ENCODE measurements at regions of chr1 and their contacts with region 1.

Region 1: DNA sequence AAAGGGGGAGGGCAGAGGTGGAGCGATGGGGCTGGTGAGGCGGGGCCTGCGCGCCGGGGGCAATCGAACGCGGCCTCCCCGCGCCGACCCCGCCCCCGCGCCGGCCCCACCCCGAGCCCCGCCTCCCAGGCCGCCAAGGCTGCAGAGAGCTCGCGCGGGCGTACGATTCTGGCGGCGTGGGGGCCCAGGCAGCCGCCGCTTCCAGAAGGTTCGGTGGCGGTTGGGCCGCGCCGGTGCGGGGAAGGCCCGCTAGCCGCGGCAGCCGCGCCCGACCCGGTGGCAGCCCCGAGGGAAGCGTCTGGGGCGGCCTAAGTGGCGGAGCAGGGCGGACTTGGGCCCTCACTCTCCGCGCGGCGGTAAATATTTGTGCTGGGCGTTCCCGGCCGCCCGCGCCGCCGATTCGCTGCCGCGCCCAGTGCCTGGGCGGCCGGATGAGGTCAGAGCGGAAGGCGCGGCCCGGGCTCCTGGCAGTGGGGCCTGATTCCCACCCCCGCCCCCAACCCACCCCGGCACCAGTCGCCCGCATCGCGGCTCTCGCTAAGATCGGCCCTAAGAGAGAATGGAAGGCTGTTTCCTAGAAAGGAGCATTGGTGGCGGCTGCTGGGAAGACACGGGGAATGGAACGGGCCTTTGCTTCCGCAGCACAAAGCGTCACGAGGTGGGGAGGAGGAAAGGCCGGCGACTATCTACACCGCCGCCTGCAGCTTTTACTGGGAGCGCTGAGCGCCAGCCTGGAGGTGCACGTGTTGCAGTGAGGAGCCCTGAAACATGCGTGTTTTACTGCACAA is at the start of gene ACOT7:
- DNase-seq: peak in 1 of 2 experiments; percentile 88
- H3K4me3 ChIP-seq: peak within 1 kb of the TSS; percentile 66 to 91 (median 72)
- H3K27ac ChIP-seq: peak within 1 kb of the TSS; percentile 91
- H3K4me1 ChIP-seq: peaks cover 0 to 11% (median 9%) of the 10 kb centered on the region in 4 experiments; a peak in 5 of 7 replicates
- H3K27me3 ChIP-seq: peaks cover 0 to 3% (median 0%) of the 10 kb centered on the region in 4 experiments; a peak in 3 of 7 replicates
- CTCF ChIP-seq: no peak
- EP300 ChIP-seq: no peak
- POLR2A ChIP-seq: peak in 1 of 2 experiments; percentile 52; a peak in 1 of 3 replicates
- RAD21 ChIP-seq: no peak
- total RNA-seq, gene ACOT7: 150 and 151 TPM in 2 replicates

Region 2: DNA sequence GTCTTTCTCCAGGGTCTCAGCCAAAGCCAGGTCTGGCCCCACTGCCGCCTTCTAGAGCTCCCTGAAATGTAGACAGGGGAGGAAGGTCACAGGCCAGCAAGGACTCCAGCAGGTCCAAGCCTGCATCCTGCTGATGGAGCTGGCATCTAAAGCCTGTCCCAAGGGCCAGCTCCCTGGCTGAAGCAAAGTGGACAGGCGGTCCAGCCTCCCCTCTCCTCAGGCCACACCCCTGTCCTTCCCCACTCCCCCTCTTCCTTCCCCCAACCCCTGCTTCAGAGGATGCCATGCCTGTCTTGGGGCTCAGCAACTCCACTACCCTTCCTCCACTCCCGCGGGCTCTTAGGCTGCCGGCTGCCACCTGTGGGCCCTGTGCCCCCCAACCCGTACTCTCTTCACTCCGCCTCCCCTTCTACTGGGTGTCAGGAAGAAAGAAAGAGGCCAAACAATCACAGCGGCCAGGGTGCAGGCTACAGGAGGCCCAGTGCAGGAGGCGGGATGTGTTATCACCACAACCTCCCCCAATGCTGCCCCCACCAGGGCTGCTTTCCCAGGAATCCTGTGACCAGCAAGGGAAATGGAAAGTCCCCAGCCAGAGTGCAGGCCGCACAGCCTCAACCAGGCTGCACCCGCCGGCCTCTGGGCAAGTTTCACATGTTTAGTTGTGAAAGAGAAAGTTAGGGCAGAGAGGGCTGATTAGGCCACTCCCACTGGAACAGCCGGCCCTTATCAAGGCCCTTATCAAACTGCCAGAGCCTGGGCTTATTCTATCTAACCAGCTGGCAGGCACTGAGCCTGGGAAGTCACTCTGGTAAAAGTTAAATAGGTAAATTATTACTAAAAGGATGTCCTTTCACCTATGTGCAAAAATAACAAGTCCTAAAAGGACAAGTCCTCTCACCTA is 34.1 kb before region 1 on chr1:
- CTCF ChIA-PET with region 1: interaction called, 1,769 read pairs
- POLR2A ChIA-PET with region 1: interaction called, 21 read pairs
- DNase-seq: peak in 1 of 2 experiments; percentile 57
- H3K4me3 ChIP-seq: no peak overlapping the region
- H3K27ac ChIP-seq: 0 out of 2 replicates have a peak overlapping the region, but pooled peaks have one; percentile 21
- H3K4me1 ChIP-seq: peaks cover 3 to 27% (median 14%) of the 10 kb centered on the region in 4 experiments
- H3K27me3 ChIP-seq: no peaks in the 10 kb centered on the region
- CTCF ChIP-seq: no peak
- EP300 ChIP-seq: no peak
- POLR2A ChIP-seq: no peak
- RAD21 ChIP-seq: no peak

Region 3: DNA sequence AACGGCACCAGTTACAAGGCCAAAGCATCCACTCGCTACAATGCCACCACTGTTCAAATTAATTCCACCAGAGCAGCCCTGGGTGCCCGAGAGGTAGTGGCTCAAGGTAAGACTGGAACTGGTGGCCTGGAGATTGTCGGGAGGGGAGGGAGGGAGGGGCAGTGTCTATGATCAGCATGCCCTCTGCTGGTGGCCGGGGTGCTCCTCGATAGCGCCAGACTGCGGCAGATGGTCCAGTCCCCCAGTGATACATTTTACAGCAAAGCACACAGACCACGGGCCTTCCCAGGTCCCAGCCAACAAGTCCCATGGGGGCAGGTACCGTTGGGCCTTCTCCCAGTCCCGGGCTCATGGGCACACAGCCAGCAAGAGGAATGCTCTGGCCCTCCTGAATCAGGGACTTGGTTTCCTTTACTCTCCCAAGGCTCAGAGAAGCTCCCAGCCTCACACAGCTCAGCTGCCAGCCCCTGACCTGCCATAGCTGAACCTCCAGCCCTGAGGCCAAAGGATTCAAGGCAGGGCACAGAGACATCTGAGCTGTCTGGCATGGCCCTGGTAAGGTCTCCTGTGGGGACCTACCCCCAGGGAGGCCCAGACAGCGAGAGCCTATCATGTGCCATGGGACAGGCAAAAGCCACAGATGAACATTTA is 15.4 kb before region 1 on chr1:
- CTCF ChIA-PET with region 1: interaction called, 1,769 read pairs
- POLR2A ChIA-PET with region 1: interaction called, 29 read pairs
- DNase-seq: no peak
- H3K4me3 ChIP-seq: no peak overlapping the region
- H3K27ac ChIP-seq: no peak overlapping the region
- H3K4me1 ChIP-seq: peaks cover 0 to 2% (median 0%) of the 10 kb centered on the region in 4 experiments; a peak in 2 of 7 replicates
- H3K27me3 ChIP-seq: no peaks in the 10 kb centered on the region
- CTCF ChIP-seq: peak; percentile 44 to 77 (median 48)
- EP300 ChIP-seq: no peak
- POLR2A ChIP-seq: no peak
- RAD21 ChIP-seq: peak; percentile 13 to 28; a peak in 2 of 4 replicates

Region 4: GRCh38 chr1:6409053-6409452 is 15.5 kb after region 1 on chr1:
- CTCF ChIA-PET with region 1: interaction called, 34 read pairs
- POLR2A ChIA-PET with region 1: interaction called, 8 read pairs
- DNase-seq: no peak
- H3K4me3 ChIP-seq: no peak overlapping the region
- H3K27ac ChIP-seq: no peak overlapping the region
- H3K4me1 ChIP-seq: no peaks in the 10 kb centered on the region
- H3K27me3 ChIP-seq: peaks cover 0 to 7% (median 4%) of the 10 kb centered on the region in 4 experiments; a peak in 5 of 7 replicates
- CTCF ChIP-seq: no peak
- EP300 ChIP-seq: no peak
- POLR2A ChIP-seq: no peak
- RAD21 ChIP-seq: no peak

Region 5: GRCh38 chr1:6414443-6414844 is 20.9 kb after region 1 on chr1:
- CTCF ChIA-PET with region 1: interaction called, 20 read pairs
- POLR2A ChIA-PET with region 1: interaction called, 4 read pairs
- DNase-seq: peak in 1 of 2 experiments; percentile 86
- H3K4me3 ChIP-seq: no peak overlapping the region; a peak in 1 of 8 replicates
- H3K27ac ChIP-seq: no peak overlapping the region
- H3K4me1 ChIP-seq: peaks cover 2 to 10% (median 5%) of the 10 kb centered on the region in 4 experiments; a peak in 6 of 7 replicates
- H3K27me3 ChIP-seq: peaks cover 29 to 52% (median 50%) of the 10 kb centered on the region in 4 experiments
- CTCF ChIP-seq: peak; percentile 79 to 91 (median 88)
- EP300 ChIP-seq: peak in 1 of 2 experiments; percentile 72; a peak in 1 of 3 replicates
- POLR2A ChIP-seq: no peak
- RAD21 ChIP-seq: peak; percentile 43 to 66

Region 6: GRCh38 chr1:6423321-6423999 is 29.9 kb after region 1 on chr1:
- CTCF ChIA-PET with region 1: interaction called, 11 read pairs
- POLR2A ChIA-PET with region 1: interaction called, 6 read pairs
- DNase-seq: peak; percentile 57 to 92
- H3K4me3 ChIP-seq: peak overlapping the region in 3 of 4 experiments; percentile 15 to 52 (median 19); a peak in 5 of 8 replicates
- H3K27ac ChIP-seq: no peak overlapping the region
- H3K4me1 ChIP-seq: peaks cover 0 to 30% (median 11%) of the 10 kb centered on the region in 4 experiments; a peak in 5 of 7 replicates
- H3K27me3 ChIP-seq: peaks cover 63 to 87% (median 79%) of the 10 kb centered on the region in 4 experiments
- CTCF ChIP-seq: peak in 2 of 3 experiments; percentile 95 to 96; a peak in 3 of 4 replicates
- EP300 ChIP-seq: no peak
- POLR2A ChIP-seq: no peak
- RAD21 ChIP-seq: peak; percentile 54 to 69

Measured in H1 (cell line).